T-cell (primary cell): ENCODE measurements at regions of chr5 and their contacts with region 1.

Region 1: GRCh38 chr5:112933651-112934365 is 11.8 kb upstream of the REEP5 start:
- DNase-seq: no peak
- ATAC-seq: no peak
- H3K4me3 ChIP-seq: no peak overlapping the region
- H3K4me3 Mint-ChIP-seq: no peak overlapping the region
- H3K27ac ChIP-seq: no peak overlapping the region
- H3K27ac Mint-ChIP-seq: peak overlapping the region in 1 of 2 donors; percentile 44
- H3K4me1 ChIP-seq: peaks cover 24 to 25% of the 10 kb centered on the region in 2 experiments
- H3K4me1 Mint-ChIP-seq: peaks cover 27 to 42% (median 34%) of the 10 kb centered on the region in 3 donors
- H3K27me3 ChIP-seq: no peaks in the 10 kb centered on the region
- H3K27me3 Mint-ChIP-seq: no peaks in the 10 kb centered on the region

Region 2: GRCh38 chr5:113581388-113581787 is 647.6 kb after region 1 on chr5:
- CTCF ChIA-PET with region 1: no interaction called
- POLR2A ChIA-PET with region 1: interaction called in 1 of 2 experiments, 11 read pairs
- DNase-seq: no peak
- ATAC-seq: no peak
- H3K4me3 ChIP-seq: no peak overlapping the region
- H3K4me3 Mint-ChIP-seq: no peak overlapping the region
- H3K27ac ChIP-seq: no peak overlapping the region
- H3K27ac Mint-ChIP-seq: no peak overlapping the region
- H3K4me1 ChIP-seq: no peaks in the 10 kb centered on the region
- H3K4me1 Mint-ChIP-seq: no peaks in the 10 kb centered on the region
- H3K27me3 ChIP-seq: no peaks in the 10 kb centered on the region
- H3K27me3 Mint-ChIP-seq: no peaks in the 10 kb centered on the region

Region 3: DNA sequence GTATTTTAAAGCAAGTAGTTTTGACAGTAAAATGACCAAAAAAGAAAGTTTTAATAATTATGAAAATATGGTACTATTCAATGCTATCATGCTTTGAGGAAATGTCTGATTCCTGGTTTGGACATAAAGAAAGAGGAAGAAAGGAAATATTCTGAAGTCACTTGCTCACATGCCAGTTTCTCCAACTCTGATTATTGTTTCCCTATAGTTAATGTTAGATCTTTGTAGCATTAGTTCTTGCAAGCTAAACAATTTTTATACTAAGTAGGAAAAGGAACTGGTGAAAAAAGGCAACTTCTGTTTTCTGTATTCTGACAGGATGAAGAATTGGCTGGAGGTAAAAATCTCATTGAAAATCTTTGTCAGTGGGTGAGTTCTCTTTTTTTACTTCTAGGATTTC is 699.2 kb after region 1 on chr5:
- CTCF ChIA-PET with region 1: no interaction called
- POLR2A ChIA-PET with region 1: no interaction called
- DNase-seq: no peak
- ATAC-seq: no peak
- H3K4me3 ChIP-seq: no peak overlapping the region
- H3K4me3 Mint-ChIP-seq: no peak overlapping the region
- H3K27ac ChIP-seq: no peak overlapping the region
- H3K27ac Mint-ChIP-seq: no peak overlapping the region
- H3K4me1 ChIP-seq: no peaks in the 10 kb centered on the region
- H3K4me1 Mint-ChIP-seq: no peaks in the 10 kb centered on the region
- H3K27me3 ChIP-seq: no peaks in the 10 kb centered on the region
- H3K27me3 Mint-ChIP-seq: peaks cover 8 to 10% of the 10 kb centered on the region in 2 donors